Posterior cingulate gyrus (tissue), 11 donors: ENCODE measurements at regions of chr19 and their contacts with region 1.

Region 1: DNA sequence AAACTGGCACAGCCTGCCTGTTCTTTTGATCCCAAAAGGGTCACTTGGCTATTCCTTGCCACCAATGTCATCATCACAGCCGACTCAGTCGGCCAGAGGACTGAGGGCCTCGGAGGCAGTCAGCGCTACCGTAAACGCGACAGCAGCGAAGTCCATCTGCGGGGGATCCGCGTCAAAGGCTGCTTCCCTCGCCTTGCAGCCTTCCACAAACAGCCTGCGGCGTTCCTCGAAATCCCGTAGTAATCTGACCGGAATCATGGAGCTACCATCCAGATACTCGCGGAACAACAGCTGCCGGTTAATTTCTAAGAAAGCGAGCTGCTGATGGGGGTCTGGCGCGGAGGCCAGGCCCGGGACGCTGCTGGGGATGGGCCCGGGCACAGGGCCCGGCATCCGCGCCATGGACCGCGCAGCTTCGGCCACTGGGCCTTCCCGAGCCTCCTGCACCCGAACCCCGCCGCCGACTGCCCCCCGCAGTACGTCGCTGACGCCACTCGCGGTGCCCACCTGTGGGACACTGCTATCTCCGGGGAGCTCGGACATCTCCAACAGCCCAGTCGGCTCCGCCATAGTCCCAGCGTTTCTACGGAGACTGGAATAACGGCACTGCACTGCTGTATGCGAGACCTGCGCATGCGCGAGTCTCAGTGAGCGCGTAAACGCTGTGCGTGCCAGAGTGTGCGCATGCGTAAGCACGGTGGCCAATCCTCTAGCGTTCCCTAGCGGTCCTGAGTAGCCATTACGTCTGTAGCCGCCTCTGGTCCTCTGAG is at the start of gene EID2B:
- DNase-seq: peak; percentile 84 to 99 (median 92)

Region 2: DNA sequence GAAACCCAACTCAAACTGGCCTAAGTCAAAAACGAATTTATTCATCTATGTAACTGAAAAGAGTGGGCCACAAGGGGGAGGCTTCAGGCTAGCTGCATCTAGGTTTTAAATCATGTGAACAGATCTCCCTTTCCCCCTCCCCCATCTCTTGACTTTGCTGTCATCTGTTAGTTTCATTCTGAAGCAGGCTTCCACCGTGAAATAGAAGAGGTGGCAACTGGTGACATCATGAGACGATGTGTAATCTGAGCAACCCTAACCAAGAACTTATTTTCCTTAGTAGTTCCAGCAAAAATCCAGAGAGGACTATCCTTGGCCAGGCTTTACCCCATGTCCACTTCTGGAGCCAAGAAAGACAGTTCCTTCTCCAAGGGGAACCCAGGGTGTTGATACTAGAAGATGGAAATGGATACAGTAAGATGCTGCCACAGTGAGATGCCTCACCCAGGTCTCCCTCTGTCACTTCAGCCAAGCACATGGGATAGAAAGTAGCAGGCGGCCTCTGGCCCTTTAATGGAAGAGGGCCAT is 180.8 kb before region 1 on chr19:
- intact Hi-C with region 1: no loop called
- DNase-seq: peak in 1 of 10 donors; percentile 43

Region 3: DNA sequence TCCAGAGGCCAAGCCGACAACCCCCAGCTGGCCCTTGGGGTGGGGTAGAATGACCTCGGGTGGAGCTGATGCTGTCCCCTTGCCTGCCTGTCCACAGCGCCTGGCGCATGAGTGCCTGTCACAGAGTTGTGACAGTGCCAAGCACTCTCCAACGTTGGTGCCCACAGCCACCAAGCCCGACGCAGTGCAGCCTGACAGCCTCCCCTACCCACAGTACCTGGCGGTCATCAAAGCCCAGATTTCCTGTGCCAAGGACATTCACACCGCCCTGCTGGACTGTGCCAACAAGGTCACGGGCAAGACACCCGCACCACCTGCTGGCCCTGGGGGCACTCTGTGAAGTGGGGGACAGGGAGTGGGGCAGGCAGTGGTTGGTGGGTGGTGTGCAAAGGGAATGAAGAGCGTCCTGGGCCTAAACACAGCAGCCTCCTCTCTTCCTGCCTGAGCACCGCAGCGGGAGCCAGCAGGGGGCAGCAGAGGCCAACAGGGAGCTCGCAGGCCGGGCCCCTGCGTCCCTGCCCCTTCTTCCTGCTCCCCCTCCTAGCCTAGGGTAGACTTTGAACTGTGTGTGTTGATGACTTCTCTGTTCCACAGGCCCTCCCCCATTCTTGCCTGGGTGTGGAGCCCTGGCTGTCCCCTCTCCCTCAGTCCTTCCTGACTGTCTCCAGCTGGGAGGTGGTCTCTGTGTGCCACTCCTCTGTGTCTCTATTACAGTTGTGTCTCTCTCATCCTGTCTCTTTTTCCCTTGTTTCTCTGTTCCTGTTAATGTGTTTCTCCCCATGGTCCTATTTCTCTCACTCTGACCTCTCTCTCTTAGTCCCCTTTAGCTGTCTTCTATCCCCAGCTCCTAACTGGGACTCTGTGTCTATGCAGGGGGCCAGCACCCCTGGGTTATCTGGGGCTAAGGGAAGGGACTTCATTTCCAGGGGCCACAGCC is 134.8 kb before region 1 on chr19:
- intact Hi-C with region 1: loop called (anchors 1 kb)
- DNase-seq: peak; percentile 56 to 97 (median 85)

Region 4: GRCh38 chr19:39445265-39446111 is 86.9 kb before region 1 on chr19 and contains the start of gene SUPT5H:
- intact Hi-C with region 1: loop called (anchors 5 kb)
- DNase-seq: peak; percentile 91 to 99 (median 95)

Region 5: GRCh38 chr19:39480337-39481228 is 51.8 kb before region 1 on chr19 and contains the start of gene TIMM50:
- intact Hi-C with region 1: loop called (anchors 2 kb)
- DNase-seq: peak; percentile 94 to 99 (median 97)

Region 6: DNA sequence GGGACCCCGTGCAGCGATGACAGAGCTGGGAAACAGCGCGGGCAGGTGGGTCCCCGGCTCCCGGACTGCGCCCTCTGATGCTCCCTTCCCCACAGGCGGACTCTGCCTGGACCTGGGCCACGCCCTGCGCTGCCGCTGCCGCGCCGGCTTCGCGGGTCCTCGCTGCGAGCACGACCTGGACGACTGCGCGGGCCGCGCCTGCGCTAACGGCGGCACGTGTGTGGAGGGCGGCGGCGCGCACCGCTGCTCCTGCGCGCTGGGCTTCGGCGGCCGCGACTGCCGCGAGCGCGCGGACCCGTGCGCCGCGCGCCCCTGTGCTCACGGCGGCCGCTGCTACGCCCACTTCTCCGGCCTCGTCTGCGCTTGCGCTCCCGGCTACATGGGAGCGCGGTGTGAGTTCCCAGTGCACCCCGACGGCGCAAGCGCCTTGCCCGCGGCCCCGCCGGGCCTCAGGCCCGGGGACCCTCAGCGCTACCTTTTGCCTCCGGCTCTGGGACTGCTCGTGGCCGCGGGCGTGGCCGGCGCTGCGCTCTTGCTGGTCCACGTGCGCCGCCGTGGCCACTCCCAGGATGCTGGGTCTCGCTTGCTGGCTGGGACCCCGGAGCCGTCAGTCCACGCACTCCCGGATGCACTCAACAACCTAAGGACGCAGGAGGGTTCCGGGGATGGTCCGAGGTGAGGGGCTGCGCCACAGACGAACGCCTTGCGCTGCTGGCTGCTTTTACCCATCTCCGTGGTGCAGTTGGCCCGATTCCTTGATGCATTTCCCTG is 25.3 kb before region 1 on chr19:
- intact Hi-C with region 1: no loop called
- DNase-seq: peak in 7 of 10 donors; percentile 25 to 91 (median 49)